WTC11 (cell line): ENCODE measurements at regions of chr2 and their contacts with region 1.

Region 1: DNA sequence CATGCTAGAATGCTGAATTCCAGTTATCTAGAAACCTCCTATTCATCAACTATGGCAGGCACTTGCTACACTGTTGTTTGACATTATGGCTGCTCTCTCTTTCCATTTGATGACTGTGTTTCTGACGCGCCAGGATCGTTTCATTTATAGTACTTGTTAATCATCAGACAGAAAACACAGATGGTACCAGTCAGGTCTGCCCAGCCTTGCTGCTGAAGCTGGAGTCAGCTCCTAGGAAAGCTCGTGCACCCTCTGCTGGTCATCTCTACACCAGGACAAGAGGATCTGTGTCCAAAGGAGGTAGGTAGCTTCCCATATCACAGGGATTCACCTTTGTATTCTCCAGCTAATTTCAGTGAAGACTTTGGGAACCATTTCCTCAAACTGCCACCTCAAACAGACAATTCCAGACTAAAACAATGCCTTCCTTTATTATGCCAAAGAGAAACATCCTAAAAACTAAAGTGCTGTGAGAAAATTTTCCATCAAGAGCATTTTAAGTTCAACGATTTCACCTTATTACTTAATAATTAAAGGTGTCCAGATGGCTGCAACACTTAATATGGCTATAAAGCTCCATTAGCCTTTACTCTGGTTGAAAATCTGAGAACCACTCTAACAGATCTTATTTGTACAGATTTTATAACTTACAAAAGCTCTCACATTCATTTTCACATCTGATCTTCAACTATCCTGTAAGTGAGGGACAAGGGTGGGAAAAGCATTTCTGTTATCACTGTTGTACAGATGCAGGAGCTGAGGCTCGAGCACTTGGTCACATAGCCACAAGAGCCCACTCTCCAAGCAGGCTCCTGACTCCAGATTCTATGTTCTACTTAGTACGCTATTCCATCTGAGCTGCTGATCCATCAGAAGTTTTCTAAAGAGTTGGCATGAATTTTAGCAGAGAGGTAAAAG is 17.5 kb downstream of the METTL8 start:
- DNase-seq: peak; percentile 88
- ATAC-seq: peak; percentile 99
- H3K4me3 Mint-ChIP-seq: no peak overlapping the region
- H3K27ac Mint-ChIP-seq: peak overlapping the region; percentile 51
- H3K4me1 Mint-ChIP-seq: peaks cover 40% of the 10 kb centered on the region
- H3K27me3 Mint-ChIP-seq: no peaks in the 10 kb centered on the region
- CTCF ChIP-seq: peak; percentile 61; the same call in 1 of the 2 replicates

Region 2: DNA sequence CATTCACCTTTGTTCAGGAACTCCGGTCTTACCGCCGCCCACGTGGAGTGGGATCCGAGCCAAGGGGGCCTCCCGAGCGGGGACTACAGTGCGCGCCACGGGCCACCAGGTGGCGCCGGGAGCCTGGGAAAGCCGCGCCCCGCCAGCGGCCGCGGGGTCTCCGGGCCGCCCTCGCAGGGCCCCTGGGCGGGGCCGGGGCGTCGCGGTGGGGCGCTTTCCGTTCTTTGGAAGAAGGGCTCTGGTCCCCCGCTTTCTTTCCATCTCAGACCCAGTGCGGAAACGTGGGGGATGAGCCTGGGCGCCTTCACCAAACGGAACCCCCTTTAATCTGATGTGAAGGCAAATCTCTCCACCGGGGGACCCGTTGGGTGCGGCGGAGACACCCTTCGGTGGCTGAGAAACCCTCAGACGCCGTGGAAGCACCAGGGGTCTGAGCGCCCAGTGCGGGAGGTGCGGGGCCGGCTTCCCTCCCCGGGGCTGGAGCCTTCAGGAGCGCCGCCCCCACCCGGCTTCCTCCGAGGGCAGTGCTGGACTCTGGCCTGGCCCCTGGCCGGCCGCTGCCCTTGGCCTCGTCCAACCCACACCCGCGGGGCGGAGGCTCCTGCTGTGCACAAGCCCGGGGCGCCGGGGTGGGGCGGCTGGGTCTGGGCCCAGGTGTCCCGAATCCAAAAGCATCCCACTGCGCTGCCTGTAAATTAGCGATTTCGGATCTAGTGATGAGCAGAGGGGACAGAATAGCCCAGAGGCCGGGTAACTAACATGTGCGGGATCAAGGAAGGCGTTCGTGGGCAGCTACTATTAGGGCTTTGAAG is 442.6 kb before region 1 on chr2:
- CTCF ChIA-PET with region 1: interaction called, 25 read pairs
- POLR2A ChIA-PET with region 1: no interaction called
- DNase-seq: peak; percentile 83
- ATAC-seq: peak; percentile 85
- H3K4me3 Mint-ChIP-seq: peak overlapping the region; percentile 57
- H3K27ac Mint-ChIP-seq: no peak overlapping the region
- H3K4me1 Mint-ChIP-seq: peaks cover 53% of the 10 kb centered on the region
- H3K27me3 Mint-ChIP-seq: peaks cover 4% of the 10 kb centered on the region
- CTCF ChIP-seq: peak; percentile 88

Region 3: GRCh38 chr2:171086352-171087290 is 329.6 kb before region 1 on chr2:
- CTCF ChIA-PET with region 1: interaction called, 23 read pairs
- POLR2A ChIA-PET with region 1: no interaction called
- DNase-seq: peak; percentile 62
- ATAC-seq: peak; percentile 91
- H3K4me3 Mint-ChIP-seq: no peak overlapping the region
- H3K27ac Mint-ChIP-seq: peak overlapping the region; percentile 88
- H3K4me1 Mint-ChIP-seq: peaks cover 36% of the 10 kb centered on the region
- H3K27me3 Mint-ChIP-seq: no peaks in the 10 kb centered on the region
- CTCF ChIP-seq: peak; percentile 38; the same call in 1 of the 2 replicates

Region 4: DNA sequence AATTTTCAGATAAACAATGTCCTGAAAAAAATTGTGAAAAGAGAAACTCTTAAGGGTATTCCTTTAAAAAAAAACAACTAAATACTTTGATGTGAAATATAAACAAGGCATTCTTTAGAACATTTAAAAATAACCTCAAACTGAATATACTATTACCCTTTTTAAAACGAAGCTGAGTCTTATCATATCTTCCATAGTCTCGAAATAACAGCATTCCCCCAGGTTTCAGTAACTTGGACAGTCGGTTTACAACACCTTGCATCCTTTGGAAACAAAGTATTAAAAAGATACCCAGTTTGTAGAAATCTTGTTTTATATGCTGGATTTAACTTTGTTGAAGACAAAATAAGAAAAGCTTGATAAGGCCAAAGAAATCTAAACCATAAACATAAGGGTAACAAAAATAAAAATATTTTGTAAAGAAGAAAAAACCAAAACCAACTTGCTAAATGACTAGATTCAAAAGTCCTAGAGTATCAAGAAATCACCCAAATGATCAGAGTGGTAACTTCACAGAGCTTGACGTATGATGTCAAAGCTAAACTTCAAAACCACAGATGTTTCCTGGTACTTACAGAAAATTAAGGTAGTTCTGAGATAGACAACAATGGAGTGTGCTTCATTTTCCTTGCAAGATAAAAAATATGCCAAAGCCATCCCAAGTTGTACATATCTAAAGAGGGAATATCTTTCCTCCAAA is 90.2 kb before region 1 on chr2:
- CTCF ChIA-PET with region 1: interaction called, 11 read pairs
- POLR2A ChIA-PET with region 1: interaction called, 6 read pairs
- DNase-seq: no peak
- ATAC-seq: no peak
- H3K4me3 Mint-ChIP-seq: no peak overlapping the region
- H3K27ac Mint-ChIP-seq: peak overlapping the region; percentile 93; the same call in 1 of the 2 replicates
- H3K4me1 Mint-ChIP-seq: peaks cover 64% of the 10 kb centered on the region
- H3K27me3 Mint-ChIP-seq: no peaks in the 10 kb centered on the region
- CTCF ChIP-seq: no peak

Region 5: DNA sequence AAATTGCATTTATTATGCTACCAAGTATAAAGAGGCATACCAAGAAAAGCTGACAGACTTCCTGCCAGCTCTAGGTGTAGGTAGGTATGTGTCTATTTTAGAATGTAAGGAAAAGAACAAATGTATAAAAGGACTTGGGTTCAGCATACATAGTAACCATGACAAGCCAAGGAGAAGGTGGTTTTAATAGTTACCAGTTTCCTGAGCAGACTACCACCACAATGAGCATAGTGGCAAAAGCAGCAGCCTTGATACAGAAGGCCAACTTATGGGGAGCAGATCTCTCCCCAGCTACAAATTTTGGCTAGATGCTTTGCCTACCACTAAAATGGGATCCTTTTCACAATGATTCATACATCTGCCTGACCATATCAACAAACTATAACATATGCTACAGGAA is 17.0 kb before region 1 on chr2:
- CTCF ChIA-PET with region 1: interaction called, 16 read pairs
- POLR2A ChIA-PET with region 1: no interaction called
- DNase-seq: no peak
- ATAC-seq: no peak
- H3K4me3 Mint-ChIP-seq: no peak overlapping the region
- H3K27ac Mint-ChIP-seq: no peak overlapping the region
- H3K4me1 Mint-ChIP-seq: peaks cover 49% of the 10 kb centered on the region
- H3K27me3 Mint-ChIP-seq: no peaks in the 10 kb centered on the region
- CTCF ChIP-seq: no peak

Region 6: DNA sequence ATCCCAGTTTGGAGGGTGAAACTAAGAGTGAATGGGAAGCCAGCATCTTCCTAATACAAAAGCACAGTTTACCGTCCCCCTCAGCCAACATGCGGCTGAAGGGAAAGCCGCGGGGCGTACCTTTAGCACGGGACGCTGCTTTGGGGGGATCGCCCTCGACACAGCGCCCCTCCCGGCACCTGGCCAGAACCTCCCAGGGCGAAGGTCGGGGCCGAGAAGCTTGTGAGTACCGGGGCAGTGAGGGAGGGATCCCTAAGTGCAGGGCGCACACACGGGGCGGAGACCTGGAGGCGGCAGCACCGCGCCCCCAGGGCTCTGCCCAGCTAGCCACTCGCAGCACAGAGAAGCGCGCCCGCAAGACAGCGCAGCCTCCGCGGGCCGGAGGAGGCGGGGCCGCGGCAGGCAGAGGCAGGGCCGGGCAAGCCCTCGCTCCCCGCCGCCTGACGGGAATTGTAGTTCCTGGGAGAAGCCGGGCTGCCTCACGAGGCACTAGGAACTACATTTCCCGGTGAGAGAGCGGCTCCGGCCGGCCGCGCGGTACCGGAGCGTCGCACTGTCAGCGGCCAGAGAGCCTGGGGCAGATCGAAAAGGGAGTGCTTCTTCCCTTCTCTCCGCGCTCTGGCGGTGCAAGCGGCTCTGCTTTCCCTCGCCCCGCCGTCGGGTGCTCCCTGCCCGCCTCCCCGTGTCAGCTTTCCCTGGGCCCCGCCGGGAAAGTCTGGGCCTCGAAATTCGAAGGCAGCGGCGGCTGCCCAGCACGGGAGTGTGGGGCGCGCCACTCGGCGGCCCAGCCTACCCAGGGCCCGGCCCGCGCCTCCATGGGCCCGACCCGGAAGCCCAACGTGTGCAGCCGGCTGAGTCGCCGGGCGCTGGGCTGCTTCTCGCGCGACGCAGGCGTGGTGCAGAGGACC is 17.7 kb after region 1 on chr2 and contains the starts of genes DCAF17 and METTL8:
- CTCF ChIA-PET with region 1: interaction called, 21 read pairs
- POLR2A ChIA-PET with region 1: no interaction called
- DNase-seq: peak; percentile 97
- ATAC-seq: peak; percentile 95
- H3K4me3 Mint-ChIP-seq: peak within 1 kb of the TSS; percentile 87
- H3K27ac Mint-ChIP-seq: peak within 1 kb of the TSS; percentile 96
- H3K4me1 Mint-ChIP-seq: peaks cover 46% of the 10 kb centered on the region
- H3K27me3 Mint-ChIP-seq: no peaks in the 10 kb centered on the region
- CTCF ChIP-seq: peak; percentile 30; the same call in 1 of the 2 replicates
- total RNA-seq, gene DCAF17: 27.2 to 34.0 TPM (median 30.5 TPM) in 3 replicates
- total RNA-seq, gene METTL8: 47.8 to 59.1 TPM (median 53.4 TPM) in 3 replicates